ENCODE measurements at regions of chr1 and their contacts with region 1.

Region 1: GRCh38 chr1:151839457-151840405 is at the start of gene C2CD4D:
- DNase-seq: peak; percentile 82
- H3K4me3 Mint-ChIP-seq: peak within 1 kb of the TSS; percentile 89
- H3K27ac Mint-ChIP-seq: peak within 1 kb of the TSS; percentile 89
- H3K4me1 Mint-ChIP-seq: peaks cover 64% of the 10 kb centered on the region
- H3K27me3 Mint-ChIP-seq: no peaks in the 10 kb centered on the region
- total RNA-seq, gene C2CD4D: 3.0 to 3.7 TPM

Region 2: DNA sequence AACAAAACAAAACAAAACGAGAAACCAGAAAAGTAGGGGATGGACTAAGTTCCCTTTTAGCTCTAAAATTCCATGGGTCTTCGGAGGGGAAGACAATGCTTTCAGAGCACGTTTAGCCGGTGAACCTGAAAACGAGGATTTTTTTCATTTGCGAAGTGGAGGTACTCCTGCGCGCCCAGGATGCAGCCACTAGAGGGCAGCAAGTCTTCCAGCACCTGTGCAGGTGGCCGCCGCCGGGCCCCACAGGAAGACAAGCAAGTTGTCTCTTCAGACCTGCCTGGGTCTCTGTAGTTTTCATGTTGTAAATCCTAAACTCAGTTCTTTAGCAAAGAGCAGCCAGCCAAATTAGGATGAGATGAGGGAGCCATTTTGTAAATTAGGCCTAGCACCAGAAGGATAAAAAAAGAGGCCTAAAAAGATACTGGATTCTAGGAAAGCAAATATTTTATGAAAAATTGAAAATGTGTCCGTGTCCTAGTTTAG is 245.5 kb before region 1 on chr1:
- CTCF ChIA-PET with region 1: interaction called, 19 read pairs
- POLR2A ChIA-PET with region 1: interaction called, 4 read pairs
- DNase-seq: peak; percentile 87
- H3K4me3 Mint-ChIP-seq: no peak overlapping the region
- H3K27ac Mint-ChIP-seq: peak overlapping the region; percentile 16
- H3K4me1 Mint-ChIP-seq: peaks cover 9% of the 10 kb centered on the region
- H3K27me3 Mint-ChIP-seq: peaks cover 20% of the 10 kb centered on the region

Region 3: DNA sequence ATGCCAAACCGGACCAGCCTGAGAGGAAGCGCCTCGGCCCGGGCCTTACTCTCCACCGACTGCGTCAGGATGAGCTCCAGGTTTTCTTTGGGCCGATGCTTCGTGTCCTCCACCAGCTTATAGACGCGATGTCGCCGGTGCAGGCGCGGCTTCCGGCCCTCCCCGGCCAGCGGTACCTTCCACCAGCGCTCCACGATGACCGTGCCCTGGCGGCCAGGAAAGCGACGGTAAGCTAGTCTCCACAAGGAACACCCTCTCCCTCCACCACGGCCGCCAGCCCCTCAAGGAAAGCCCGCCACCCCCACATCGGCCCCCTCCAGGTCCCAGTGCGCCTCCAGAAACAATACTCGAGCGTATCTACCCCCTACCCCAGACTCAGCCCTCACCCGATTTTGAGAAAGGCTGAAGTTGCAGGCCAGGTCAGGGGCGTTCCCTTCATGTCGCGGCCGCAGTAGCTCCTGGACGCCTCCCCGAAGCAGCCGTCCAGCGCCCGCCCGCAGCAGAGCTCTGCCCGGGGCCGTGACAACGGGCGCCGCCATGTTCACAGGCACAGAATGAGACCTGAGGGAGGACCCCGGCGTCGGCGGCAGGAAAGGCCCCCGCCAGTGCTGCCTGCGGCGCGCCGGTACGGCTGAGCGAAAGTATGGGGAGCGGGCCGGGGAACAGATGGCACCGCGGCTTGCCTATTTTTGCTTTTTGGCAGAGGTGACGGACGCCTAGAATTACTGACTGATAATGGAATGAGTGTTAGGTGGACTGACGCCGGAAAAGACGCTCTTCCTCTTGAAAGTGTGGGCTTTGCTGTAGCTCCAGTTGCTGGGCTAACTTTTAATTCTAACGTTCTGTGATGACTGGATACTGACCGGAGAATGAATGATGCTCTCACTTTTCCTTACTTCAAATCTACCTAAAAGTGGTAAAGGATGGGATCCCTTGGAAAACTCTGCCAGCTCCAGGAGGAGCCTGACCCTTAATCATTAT is 76.5 kb before region 1 on chr1 and contains the start of gene MRPL9:
- CTCF ChIA-PET with region 1: interaction called, 12 read pairs
- POLR2A ChIA-PET with region 1: interaction called, 10 read pairs
- DNase-seq: peak; percentile 89
- H3K4me3 Mint-ChIP-seq: peak within 1 kb of the TSS; percentile 77
- H3K27ac Mint-ChIP-seq: peak within 1 kb of the TSS; percentile 79
- H3K4me1 Mint-ChIP-seq: peaks cover 43% of the 10 kb centered on the region
- H3K27me3 Mint-ChIP-seq: no peaks in the 10 kb centered on the region
- total RNA-seq, gene MRPL9: 97.9 to 98.9 TPM

Region 4: DNA sequence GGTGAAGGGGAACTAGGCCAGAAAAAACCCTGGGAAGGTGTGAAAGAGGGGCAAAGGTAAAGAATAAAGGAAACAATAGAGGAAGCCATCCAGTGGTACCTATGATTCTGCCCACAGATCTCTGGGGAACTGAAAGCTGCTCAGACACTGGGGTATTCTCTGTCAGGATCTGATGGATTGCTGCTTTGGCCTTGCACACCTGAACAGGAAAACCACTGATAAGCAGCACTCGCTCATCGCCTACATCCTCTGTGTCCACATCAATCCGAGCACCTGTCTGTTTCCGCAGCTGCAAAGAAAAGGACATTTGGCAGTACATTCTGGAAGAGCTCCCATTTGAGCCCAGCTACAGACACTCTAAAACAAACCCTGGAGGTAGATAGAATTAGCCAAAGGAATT is 59.9 kb before region 1 on chr1:
- CTCF ChIA-PET with region 1: no interaction called
- POLR2A ChIA-PET with region 1: no interaction called
- DNase-seq: no peak
- H3K4me3 Mint-ChIP-seq: no peak overlapping the region
- H3K27ac Mint-ChIP-seq: no peak overlapping the region
- H3K4me1 Mint-ChIP-seq: no peaks in the 10 kb centered on the region
- H3K27me3 Mint-ChIP-seq: no peaks in the 10 kb centered on the region

Region 5: DNA sequence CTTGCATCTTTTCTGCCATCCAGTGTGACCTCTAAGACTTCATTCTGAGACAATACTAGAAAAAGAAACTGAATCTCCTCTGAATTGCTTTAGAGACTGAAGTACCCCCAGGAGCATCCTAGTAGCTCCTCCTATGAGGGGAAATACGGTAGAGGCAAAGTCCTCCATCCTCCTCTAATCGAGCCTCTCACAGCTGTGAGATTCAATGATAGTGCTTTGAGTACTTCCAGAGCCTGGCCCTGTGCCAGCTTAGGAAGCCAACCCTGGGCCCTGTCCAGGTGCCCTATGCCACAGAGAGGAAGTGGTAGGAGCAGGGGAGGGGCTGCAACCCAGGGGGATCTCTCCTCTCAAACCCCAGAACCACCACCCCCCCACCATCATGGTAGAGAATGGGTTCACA is 18.8 kb before region 1 on chr1:
- CTCF ChIA-PET with region 1: interaction called, 21 read pairs
- POLR2A ChIA-PET with region 1: interaction called, 18 read pairs
- DNase-seq: no peak
- H3K4me3 Mint-ChIP-seq: peak overlapping the region; percentile 66
- H3K27ac Mint-ChIP-seq: peak overlapping the region; percentile 74
- H3K4me1 Mint-ChIP-seq: peaks cover 87% of the 10 kb centered on the region
- H3K27me3 Mint-ChIP-seq: no peaks in the 10 kb centered on the region

Region 6: GRCh38 chr1:151853411-151853943 is 13.7 kb after region 1 on chr1 and contains the start of gene THEM5:
- CTCF ChIA-PET with region 1: interaction called, 5 read pairs
- POLR2A ChIA-PET with region 1: interaction called, 21 read pairs
- DNase-seq: no peak
- H3K4me3 Mint-ChIP-seq: no peak within 1 kb of the TSS
- H3K27ac Mint-ChIP-seq: no peak within 1 kb of the TSS
- H3K4me1 Mint-ChIP-seq: peaks cover 13% of the 10 kb centered on the region
- H3K27me3 Mint-ChIP-seq: no peaks in the 10 kb centered on the region
- total RNA-seq, gene THEM5: not detected

Region 7: DNA sequence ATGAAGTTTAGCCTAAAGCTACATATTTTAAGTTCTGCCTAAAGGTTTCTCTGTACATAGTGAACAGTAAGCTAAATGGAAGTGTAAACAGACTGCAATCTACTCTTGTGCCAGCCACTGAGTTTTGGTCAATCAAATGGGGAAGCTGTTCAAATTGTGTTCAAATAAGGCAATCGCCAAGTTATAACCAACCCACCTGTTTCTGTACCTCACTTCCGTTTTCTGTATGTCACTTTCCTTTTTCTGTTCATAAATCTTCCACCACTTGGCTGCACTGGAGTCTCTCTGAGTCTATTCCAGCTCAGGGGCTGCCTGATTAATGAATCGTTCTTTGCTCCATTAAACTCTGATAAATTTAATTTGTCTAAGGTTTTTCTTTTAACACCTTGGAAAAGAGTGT is 80.4 kb after region 1 on chr1:
- CTCF ChIA-PET with region 1: no interaction called
- POLR2A ChIA-PET with region 1: no interaction called
- DNase-seq: no peak
- H3K4me3 Mint-ChIP-seq: no peak overlapping the region
- H3K27ac Mint-ChIP-seq: no peak overlapping the region
- H3K4me1 Mint-ChIP-seq: peaks cover 10% of the 10 kb centered on the region
- H3K27me3 Mint-ChIP-seq: peaks cover 3% of the 10 kb centered on the region

Measured in activated CD4-positive, alpha-beta memory T cell treated with anti-CD3 and anti-CD28 coated beads, Interleukin-2, amount 10 ng/mL, durations not matched to agents 7 days and 5 days (primary cell).